Breast epithelium (tissue), 4 donors: ENCODE measurements at regions of chr18 and their contacts with region 1.

Region 1: GRCh38 chr18:10299643-10300042 is 154.8 kb upstream of the APCDD1 start:
- DNase-seq: no peak
- H3K4me3 ChIP-seq: no peak overlapping the region
- H3K27ac ChIP-seq: no peak overlapping the region
- H3K4me1 ChIP-seq: no peaks in the 10 kb centered on the region
- H3K27me3 ChIP-seq: no peaks in the 10 kb centered on the region
- CTCF ChIP-seq: no peak
- POLR2A ChIP-seq: no peak

Region 2: DNA sequence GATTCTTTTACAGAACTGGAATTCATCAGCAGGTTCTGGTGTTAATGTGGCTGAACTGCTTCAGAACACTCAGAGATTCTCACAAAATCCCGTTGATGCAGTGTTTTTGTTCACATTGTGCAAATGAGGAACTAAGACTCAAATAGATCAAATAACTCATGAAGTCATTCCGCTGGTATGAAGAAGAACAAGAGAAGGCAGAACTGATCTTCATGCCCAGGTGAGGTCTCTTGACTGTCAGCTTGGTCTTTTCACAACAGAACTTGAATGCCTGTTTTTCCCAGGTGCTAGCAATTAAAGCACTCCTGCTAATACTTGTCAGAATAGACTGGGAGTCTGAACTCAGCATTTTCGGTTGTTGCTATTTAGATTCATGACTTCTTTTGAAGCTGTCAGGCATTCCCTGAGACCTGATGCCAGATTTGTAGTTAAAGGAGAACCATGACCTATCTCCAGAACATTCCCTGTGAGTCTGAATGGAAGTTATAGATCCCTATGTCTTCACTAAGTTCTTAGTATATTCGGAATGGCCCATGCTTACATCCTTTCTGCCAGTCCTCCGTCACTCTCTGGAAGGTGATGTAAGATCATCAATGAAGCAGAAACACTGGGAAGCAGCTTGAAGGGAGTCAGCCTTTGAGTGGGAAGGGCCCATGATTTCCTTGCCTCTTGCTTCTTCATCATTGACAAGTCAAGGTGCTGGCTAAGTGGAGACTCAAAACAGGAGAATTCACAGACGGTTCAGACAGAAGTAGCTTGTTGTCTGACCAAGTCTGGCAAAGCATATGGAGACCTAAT is 1438.6 kb before region 1 on chr18:
- intact Hi-C with region 1: loop called (anchors 10 kb)
- DNase-seq: no peak
- H3K4me3 ChIP-seq: no peak overlapping the region
- H3K27ac ChIP-seq: no peak overlapping the region
- H3K4me1 ChIP-seq: no peaks in the 10 kb centered on the region
- H3K27me3 ChIP-seq: no peaks in the 10 kb centered on the region
- CTCF ChIP-seq: no peak
- POLR2A ChIP-seq: no peak